Endothelial cell of umbilical vein (primary cell): ENCODE measurements at regions of chrX and their contacts with region 1.

Region 1: DNA sequence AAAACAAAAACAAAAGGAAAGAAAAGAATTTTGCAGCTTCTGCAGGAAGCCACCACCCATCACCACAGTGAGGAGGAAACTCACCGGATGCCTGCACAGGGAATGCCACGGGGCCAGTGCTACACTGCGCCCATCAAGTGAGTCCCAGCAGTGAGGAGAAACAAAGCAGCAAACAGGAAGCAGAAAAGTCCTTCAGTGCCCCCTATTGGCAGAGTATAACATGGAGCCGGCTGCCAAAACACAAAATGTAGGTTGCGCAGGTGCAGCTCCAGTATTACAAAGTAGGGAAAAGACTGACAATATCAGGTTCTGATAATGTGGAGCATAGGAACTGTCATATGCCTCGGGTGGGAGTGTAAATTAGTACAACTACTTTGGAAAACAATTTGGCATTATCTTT is 23.3 kb upstream of the SCML2 start:
- DNase-seq: peak; percentile 5
- H3K4me3 ChIP-seq: no peak overlapping the region
- H3K27ac ChIP-seq: no peak overlapping the region
- H3K4me1 ChIP-seq: no peaks in the 10 kb centered on the region
- H3K27me3 ChIP-seq: no peaks in the 10 kb centered on the region
- CTCF ChIP-seq: peak; percentile 36 to 43
- POLR2A ChIP-seq: no peak

Region 2: GRCh38 chrX:17788439-17788838 is 589.4 kb before region 1 on chrX:
- CTCF ChIA-PET with region 1: interaction called, 9 read pairs
- POLR2A ChIA-PET with region 1: no interaction called
- dilution Hi-C with region 1: no loop called
- intact Hi-C with region 1: loop called (anchors 1 kb)
- DNase-seq: peak; percentile 24
- H3K4me3 ChIP-seq: no peak overlapping the region
- H3K27ac ChIP-seq: no peak overlapping the region
- H3K4me1 ChIP-seq: no peaks in the 10 kb centered on the region
- H3K27me3 ChIP-seq: no peaks in the 10 kb centered on the region
- CTCF ChIP-seq: peak; percentile 52 to 69
- POLR2A ChIP-seq: no peak

Region 3: DNA sequence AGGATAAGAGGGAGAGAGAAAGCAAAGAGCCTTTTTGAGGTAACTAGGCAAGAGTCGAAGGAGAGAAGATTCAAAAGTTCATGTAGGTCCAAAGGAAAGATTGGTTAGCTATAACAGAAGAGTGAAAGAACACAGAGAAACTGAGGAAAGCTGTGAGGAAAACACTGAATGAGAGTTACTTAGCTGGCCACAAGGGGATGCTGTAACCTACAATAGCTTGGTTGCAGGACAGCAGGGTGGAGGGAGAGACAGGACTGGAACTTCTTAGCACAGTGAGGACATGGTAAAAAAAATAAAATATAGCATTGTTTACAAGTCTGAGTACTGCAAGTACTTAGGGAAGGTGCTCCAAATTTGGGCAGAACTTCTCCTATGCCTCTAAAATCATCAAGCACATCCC is 565.0 kb before region 1 on chrX:
- CTCF ChIA-PET with region 1: interaction called, 26 read pairs
- POLR2A ChIA-PET with region 1: no interaction called
- dilution Hi-C with region 1: no loop called
- intact Hi-C with region 1: no loop called
- DNase-seq: no peak
- H3K4me3 ChIP-seq: no peak overlapping the region
- H3K27ac ChIP-seq: no peak overlapping the region
- H3K4me1 ChIP-seq: no peaks in the 10 kb centered on the region
- H3K27me3 ChIP-seq: no peaks in the 10 kb centered on the region
- CTCF ChIP-seq: peak in 1 of 2 donors; percentile 47
- POLR2A ChIP-seq: no peak

Region 4: DNA sequence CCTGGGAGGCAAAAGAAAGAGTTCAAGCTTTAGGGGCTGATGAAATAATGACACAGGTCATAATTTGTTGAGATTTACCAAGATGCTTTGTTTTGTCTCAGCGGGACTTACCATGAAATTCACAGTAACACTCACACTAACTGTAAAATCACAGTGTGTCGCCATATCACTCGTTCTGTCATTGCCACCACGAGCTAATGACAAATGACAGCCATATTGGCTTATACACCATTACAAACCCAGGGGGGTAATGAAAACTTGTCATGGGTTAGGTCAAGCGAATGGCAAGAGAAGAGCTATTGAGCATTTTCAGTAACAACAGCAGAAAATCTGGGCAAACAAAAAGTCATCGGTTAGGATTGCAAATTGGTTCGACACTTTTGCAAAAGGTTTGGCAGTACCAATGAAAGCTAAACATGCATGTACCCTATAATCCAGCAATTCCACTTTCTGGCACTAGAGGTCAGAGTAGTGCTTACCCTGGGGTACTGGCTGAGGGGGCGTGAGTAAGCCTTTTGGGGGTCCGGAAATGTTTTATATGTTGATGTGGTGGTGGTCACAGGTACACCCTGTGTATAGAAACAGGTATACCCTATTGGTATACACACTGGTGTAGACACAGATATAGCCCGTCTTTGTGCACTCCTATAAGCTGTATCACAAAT is 432.8 kb before region 1 on chrX:
- CTCF ChIA-PET with region 1: interaction called, 19 read pairs
- POLR2A ChIA-PET with region 1: no interaction called
- dilution Hi-C with region 1: no loop called
- intact Hi-C with region 1: no loop called
- DNase-seq: peak; percentile 1
- H3K4me3 ChIP-seq: no peak overlapping the region
- H3K27ac ChIP-seq: no peak overlapping the region
- H3K4me1 ChIP-seq: no peaks in the 10 kb centered on the region
- H3K27me3 ChIP-seq: no peaks in the 10 kb centered on the region
- CTCF ChIP-seq: peak; percentile 28 to 37
- POLR2A ChIP-seq: no peak